ENCODE measurements at regions of chr13 and their contacts with region 1.

Region 1: DNA sequence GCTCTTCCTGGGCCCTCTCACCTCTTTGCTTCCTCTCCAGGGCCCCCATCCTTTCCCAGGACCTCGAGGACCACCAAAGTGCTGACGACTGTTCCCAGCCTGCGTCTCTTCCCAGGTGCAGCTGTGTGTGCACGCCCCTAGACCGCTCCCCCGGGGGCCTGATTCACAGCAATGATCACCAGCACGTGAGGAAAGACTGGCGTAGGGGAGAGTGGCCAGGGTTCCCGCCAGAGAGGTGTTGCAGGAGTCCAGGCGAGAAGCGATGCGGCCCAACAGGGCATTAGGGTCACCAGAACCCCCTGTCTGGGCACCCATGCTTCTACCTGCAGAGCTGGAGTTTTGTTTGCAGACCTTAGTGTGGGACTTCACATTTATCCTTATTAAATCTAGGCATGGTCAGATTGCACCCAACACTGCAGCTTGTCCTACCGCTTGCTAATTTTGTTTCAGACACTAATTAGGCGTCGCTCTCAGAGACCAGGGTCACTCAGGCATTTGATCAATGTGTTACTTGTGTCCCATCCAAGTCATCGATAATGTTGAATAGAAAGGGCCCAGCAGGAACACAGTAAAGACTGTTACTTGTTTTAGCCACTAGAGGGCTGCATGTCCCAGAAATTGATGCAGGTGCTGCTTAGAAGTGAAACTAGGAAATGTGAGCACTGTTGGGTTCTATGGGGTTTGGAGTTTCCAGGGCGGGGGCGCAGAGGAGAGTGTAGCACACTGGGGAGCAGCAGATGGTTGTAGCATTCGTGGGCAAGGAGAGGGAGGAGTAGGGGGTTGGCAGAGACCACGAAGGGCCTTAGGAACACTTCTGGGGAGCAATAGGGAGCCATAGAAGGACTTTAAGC is 53.2 kb downstream of the CDADC1 start:
- DNase-seq: peak; percentile 25 to 87 (median 59)
- ATAC-seq: peak; percentile 99
- H3K4me3 ChIP-seq: peak overlapping the region; percentile 45 to 52
- H3K4me3 Mint-ChIP-seq: peak overlapping the region; percentile 84
- H3K27ac ChIP-seq: peak overlapping the region in 1 of 2 experiments; percentile 17
- H3K27ac Mint-ChIP-seq: peak overlapping the region; percentile 77
- H3K4me1 ChIP-seq: no peaks in the 10 kb centered on the region
- H3K4me1 Mint-ChIP-seq: peaks cover 4% of the 10 kb centered on the region
- H3K27me3 ChIP-seq: no peaks in the 10 kb centered on the region
- H3K27me3 Mint-ChIP-seq: no peaks in the 10 kb centered on the region
- CTCF ChIP-seq: peak; percentile 83

Region 2: GRCh38 chr13:49314344-49314882 is 13.4 kb after region 1 on chr13:
- CTCF ChIA-PET with region 1: interaction called, 20 read pairs
- POLR2A ChIA-PET with region 1: no interaction called
- intact Hi-C with region 1: no loop called
- DNase-seq: no peak
- ATAC-seq: no peak
- H3K4me3 ChIP-seq: no peak overlapping the region
- H3K4me3 Mint-ChIP-seq: no peak overlapping the region
- H3K27ac ChIP-seq: no peak overlapping the region
- H3K27ac Mint-ChIP-seq: no peak overlapping the region
- H3K4me1 ChIP-seq: no peaks in the 10 kb centered on the region
- H3K4me1 Mint-ChIP-seq: no peaks in the 10 kb centered on the region
- H3K27me3 ChIP-seq: no peaks in the 10 kb centered on the region
- H3K27me3 Mint-ChIP-seq: no peaks in the 10 kb centered on the region
- CTCF ChIP-seq: no peak

Region 3: DNA sequence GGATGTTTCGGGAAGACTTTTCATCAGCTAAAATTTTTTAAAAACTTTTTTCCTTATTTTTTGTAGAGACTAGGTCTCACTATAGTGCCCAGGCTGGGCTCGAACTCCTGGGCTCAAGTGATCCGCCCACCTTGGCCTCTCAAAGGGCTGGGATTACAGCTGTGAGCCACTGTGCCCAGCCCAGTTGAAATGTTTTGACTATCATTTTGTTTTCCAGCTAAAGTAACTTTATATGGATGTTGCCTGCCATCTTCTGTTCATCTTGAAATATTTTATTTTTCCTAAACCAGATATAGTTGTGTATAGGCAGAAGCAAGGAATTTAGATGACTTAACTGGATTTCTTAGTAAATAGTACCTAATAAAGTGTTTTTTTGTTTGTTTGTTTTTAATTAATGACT is 135.9 kb after region 1 on chr13:
- CTCF ChIA-PET with region 1: interaction called, 3 read pairs
- POLR2A ChIA-PET with region 1: no interaction called
- intact Hi-C with region 1: loop called in 1 of 2 experiments (anchors 5 kb)
- DNase-seq: peak in 1 of 9 experiments; percentile 14
- ATAC-seq: no peak
- H3K4me3 ChIP-seq: no peak overlapping the region
- H3K4me3 Mint-ChIP-seq: no peak overlapping the region
- H3K27ac ChIP-seq: no peak overlapping the region
- H3K27ac Mint-ChIP-seq: no peak overlapping the region
- H3K4me1 ChIP-seq: no peaks in the 10 kb centered on the region
- H3K4me1 Mint-ChIP-seq: no peaks in the 10 kb centered on the region
- H3K27me3 ChIP-seq: no peaks in the 10 kb centered on the region
- H3K27me3 Mint-ChIP-seq: peaks cover 2% of the 10 kb centered on the region
- CTCF ChIP-seq: no peak

Region 4: GRCh38 chr13:49517461-49517860 is 216.5 kb after region 1 on chr13:
- CTCF ChIA-PET with region 1: interaction called, 3 read pairs
- POLR2A ChIA-PET with region 1: no interaction called
- intact Hi-C with region 1: loop called in 1 of 2 experiments (anchors 1 kb)
- DNase-seq: peak in 4 of 9 experiments; percentile 17 to 34 (median 23)
- ATAC-seq: no peak
- H3K4me3 ChIP-seq: no peak overlapping the region
- H3K4me3 Mint-ChIP-seq: no peak overlapping the region
- H3K27ac ChIP-seq: no peak overlapping the region
- H3K27ac Mint-ChIP-seq: no peak overlapping the region
- H3K4me1 ChIP-seq: no peaks in the 10 kb centered on the region
- H3K4me1 Mint-ChIP-seq: peaks cover 14% of the 10 kb centered on the region
- H3K27me3 ChIP-seq: no peaks in the 10 kb centered on the region
- H3K27me3 Mint-ChIP-seq: no peaks in the 10 kb centered on the region
- CTCF ChIP-seq: peak; percentile 26